Heart right ventricle (tissue), 16 donors: ENCODE measurements at regions of chr2 and their contacts with region 1.

Region 1: GRCh38 chr2:120503793-120504571 is 158.0 kb downstream of the INHBB start:
- DNase-seq: peak; percentile 72 to 73
- ATAC-seq: peak; percentile 66 to 96 (median 90)
- H3K4me3 ChIP-seq: no peak overlapping the region
- H3K27ac ChIP-seq: peak overlapping the region in 9 of 10 donors; percentile 46 to 78 (median 60)
- H3K4me1 ChIP-seq: peaks cover 0 to 21% (median 9%) of the 10 kb centered on the region in 9 donors
- H3K27me3 ChIP-seq: peaks cover 0 to 5% (median 0%) of the 10 kb centered on the region in 7 donors
- CTCF ChIP-seq: peak in 4 of 9 donors; percentile 15 to 50 (median 34)

Region 2: DNA sequence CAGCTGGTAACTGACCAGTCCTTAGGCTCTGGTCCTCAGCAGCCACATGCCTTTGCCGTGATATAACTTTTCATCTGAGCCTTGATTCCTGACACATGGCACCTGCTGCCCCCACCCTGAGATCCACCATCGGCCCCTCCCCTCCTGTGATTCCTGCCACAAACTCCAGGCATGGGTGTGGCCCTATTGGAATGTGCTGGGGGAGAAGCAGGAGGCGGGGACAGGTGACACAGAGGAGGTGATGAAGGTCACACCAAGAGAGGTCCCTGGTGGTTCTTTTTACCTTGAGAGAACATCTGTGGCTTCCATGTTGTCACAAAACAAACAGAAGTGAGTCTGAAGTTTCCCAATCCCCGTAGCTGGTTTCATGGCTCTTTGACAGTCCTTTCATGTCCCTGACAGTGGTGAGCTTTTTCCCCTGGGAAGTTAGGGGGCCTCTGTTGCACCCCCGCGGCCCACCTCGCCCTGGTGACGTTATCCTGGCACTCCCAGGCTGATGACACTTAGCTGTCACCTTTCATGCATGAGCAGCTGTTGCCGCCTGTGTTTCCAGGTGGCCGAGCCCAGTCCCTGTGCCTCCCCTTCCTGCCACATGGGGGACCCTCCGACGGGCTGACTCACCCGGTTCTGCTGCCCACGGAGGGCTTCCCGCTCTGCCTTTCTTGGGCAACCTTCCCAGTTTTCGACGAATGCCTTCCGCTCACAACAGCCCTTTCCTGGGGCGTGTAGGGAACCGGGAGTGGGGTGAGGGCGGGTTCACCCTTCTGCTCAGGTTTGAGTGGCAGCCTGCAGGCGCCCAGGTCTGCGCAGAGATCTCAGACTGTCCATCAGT is 165.4 kb after region 1 on chr2:
- intact Hi-C with region 1: loop called in 1 of 10 experiments (anchors 5 kb)
- DNase-seq: no peak
- ATAC-seq: peak in 6 of 8 donors; percentile 30 to 61 (median 44)
- H3K4me3 ChIP-seq: no peak overlapping the region
- H3K27ac ChIP-seq: no peak overlapping the region
- H3K4me1 ChIP-seq: peaks cover 0 to 9% (median 0%) of the 10 kb centered on the region in 9 donors
- H3K27me3 ChIP-seq: peaks cover 0 to 53% (median 36%) of the 10 kb centered on the region in 7 donors
- CTCF ChIP-seq: peak in 5 of 9 donors; percentile 23 to 40 (median 37)

Region 3: GRCh38 chr2:120758181-120759144 is 254.5 kb after region 1 on chr2:
- intact Hi-C with region 1: no loop called
- DNase-seq: peak; percentile 56 to 73
- ATAC-seq: peak; percentile 84 to 94 (median 91)
- H3K4me3 ChIP-seq: no peak overlapping the region
- H3K27ac ChIP-seq: peak overlapping the region in 9 of 10 donors; percentile 61 to 80 (median 75)
- H3K4me1 ChIP-seq: peaks cover 0 to 41% (median 6%) of the 10 kb centered on the region in 9 donors
- H3K27me3 ChIP-seq: peaks cover 0 to 17% (median 5%) of the 10 kb centered on the region in 7 donors
- CTCF ChIP-seq: no peak